MCF 10A (cell line): ENCODE measurements at regions of chr1 and their contacts with region 1.

Region 1: DNA sequence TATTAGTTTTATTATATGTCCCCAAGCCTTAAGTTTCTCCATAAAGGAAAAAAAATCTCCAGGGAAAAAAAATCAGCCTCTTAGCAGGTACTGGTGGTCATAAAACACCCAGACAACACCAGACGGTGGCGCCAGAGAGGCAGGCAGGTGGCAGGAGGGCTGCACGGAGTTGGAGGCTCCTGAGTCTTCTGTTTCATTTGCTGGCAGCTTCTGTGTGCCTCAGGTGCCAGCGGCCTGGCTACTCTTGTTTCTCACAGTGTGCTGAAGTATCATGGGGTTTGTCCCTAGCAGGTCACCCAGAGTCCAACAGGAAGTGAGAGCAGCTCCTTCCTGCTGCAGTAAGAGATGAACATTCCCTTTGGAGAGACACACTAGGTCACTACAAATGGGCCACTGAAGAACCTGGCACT is 123.3 kb upstream of the GADD45A start:
- DNase-seq: peak; percentile 90
- H3K4me3 Mint-ChIP-seq: no peak overlapping the region
- H3K27ac Mint-ChIP-seq: no peak overlapping the region
- H3K4me1 Mint-ChIP-seq: peaks cover 6% of the 10 kb centered on the region
- H3K27me3 Mint-ChIP-seq: no peaks in the 10 kb centered on the region
- CTCF ChIP-seq: peak; percentile 95

Region 2: DNA sequence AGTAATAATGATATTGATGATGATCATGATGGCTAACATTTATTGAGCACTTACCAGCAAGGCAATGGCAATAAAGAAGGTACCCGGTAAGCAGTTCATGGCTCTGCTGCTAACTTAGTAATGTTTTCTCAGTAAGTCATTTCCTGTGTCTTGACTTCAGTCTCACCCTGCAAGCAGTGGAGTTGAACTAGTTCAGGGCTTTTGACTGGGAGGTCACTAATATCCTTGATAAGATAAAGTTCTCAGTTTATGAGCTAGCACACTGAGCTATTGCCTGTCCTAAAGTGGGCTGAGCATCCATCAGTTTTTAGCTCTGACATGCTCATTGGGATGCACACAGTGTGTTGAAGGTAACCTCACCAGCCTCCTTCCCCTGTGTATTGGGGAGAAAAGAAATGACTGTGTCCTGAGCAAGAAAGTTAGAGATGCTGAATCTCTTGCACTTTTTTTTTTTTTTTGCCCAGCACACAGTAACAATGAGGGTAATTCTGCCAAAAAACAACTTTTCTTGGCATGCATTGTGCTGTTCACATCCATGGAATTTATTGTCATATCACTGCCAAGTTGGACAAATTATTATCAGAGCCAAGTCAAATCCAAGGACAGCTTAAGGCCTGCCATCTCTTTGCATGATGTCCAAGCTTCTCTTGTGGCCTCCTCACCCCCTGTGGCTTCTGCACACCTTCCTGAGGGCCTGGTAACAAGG is 67.8 kb after region 1 on chr1:
- CTCF ChIA-PET with region 1: interaction called, 12 read pairs
- POLR2A ChIA-PET with region 1: no interaction called
- intact Hi-C with region 1: no loop called
- DNase-seq: peak; percentile 71
- H3K4me3 Mint-ChIP-seq: no peak overlapping the region
- H3K27ac Mint-ChIP-seq: no peak overlapping the region
- H3K4me1 Mint-ChIP-seq: peaks cover 30% of the 10 kb centered on the region
- H3K27me3 Mint-ChIP-seq: no peaks in the 10 kb centered on the region
- CTCF ChIP-seq: no peak

Region 3: DNA sequence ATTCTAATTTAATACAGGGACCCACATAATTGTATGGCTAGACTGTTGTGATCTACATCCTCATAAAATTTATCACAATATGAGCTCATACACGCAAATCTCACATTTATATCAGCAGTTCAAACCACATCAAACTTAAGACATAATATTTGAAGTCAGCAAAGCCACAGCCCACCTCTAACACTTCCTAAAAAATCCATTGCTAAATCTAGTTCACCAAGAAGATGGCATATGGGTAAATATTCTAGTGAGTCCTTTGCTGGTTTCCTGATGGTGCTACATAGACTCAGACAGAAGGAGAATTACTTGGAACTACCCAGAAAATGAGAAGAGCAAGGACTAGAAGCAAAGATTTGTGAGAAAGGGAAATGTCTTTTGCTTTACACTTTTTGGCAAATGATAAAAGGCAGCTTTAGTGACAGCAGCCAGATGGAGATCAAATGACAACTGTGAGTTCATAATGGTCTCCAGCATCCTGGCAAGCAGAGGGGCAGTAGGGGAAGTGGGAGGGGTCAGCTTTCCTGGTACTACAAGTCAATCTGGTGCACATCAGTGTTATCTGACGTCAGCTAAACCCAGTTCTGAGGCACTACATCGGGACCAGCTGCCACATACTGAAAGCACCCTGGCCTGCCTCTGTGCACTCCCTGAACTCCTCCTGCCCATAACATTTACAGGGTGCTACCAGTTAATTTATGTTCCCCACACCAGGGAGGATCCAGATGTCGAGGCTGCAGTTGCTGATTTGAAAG is 112.7 kb after region 1 on chr1:
- CTCF ChIA-PET with region 1: interaction called, 18 read pairs
- POLR2A ChIA-PET with region 1: interaction called, 4 read pairs
- intact Hi-C with region 1: no loop called
- DNase-seq: no peak
- H3K4me3 Mint-ChIP-seq: no peak overlapping the region
- H3K27ac Mint-ChIP-seq: no peak overlapping the region
- H3K4me1 Mint-ChIP-seq: peaks cover under 1% of the 10 kb centered on the region
- H3K27me3 Mint-ChIP-seq: no peaks in the 10 kb centered on the region
- CTCF ChIP-seq: no peak

Region 4: GRCh38 chr1:67705735-67706453 is 144.2 kb after region 1 on chr1:
- CTCF ChIA-PET with region 1: interaction called, 10 read pairs
- POLR2A ChIA-PET with region 1: no interaction called
- intact Hi-C with region 1: no loop called
- DNase-seq: no peak
- H3K4me3 Mint-ChIP-seq: no peak overlapping the region
- H3K27ac Mint-ChIP-seq: no peak overlapping the region
- H3K4me1 Mint-ChIP-seq: peaks cover 22% of the 10 kb centered on the region
- H3K27me3 Mint-ChIP-seq: no peaks in the 10 kb centered on the region
- CTCF ChIP-seq: no peak

Region 5: DNA sequence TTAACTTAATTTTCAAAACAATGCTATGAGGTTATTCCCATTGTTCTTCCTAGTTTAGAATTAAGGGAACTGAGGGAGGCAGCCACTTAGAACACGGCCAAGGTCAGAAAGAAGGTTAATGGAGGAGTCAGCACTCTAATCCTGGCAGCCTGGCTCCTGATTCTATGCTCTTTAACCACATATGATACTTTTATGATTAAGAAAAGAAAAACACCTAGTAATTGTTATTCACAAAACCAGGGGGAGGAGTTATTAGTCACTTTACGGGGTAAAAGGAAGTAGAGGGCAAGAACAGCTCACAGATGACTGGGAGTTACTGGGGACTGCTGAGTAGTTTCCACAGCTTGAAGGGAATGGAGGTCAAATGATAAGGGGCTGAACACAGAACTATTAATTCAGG is 161.9 kb after region 1 on chr1:
- CTCF ChIA-PET with region 1: interaction called, 10 read pairs
- POLR2A ChIA-PET with region 1: interaction called, 3 read pairs
- intact Hi-C with region 1: no loop called
- DNase-seq: peak; percentile 77
- H3K4me3 Mint-ChIP-seq: no peak overlapping the region
- H3K27ac Mint-ChIP-seq: no peak overlapping the region
- H3K4me1 Mint-ChIP-seq: peaks cover 16% of the 10 kb centered on the region
- H3K27me3 Mint-ChIP-seq: no peaks in the 10 kb centered on the region
- CTCF ChIP-seq: no peak

Region 6: GRCh38 chr1:67748630-67749029 is 186.9 kb after region 1 on chr1:
- CTCF ChIA-PET with region 1: interaction called, 32 read pairs
- POLR2A ChIA-PET with region 1: no interaction called
- intact Hi-C with region 1: no loop called
- DNase-seq: peak; percentile 79
- H3K4me3 Mint-ChIP-seq: peak overlapping the region; percentile 65
- H3K27ac Mint-ChIP-seq: peak overlapping the region; percentile 89
- H3K4me1 Mint-ChIP-seq: peaks cover 58% of the 10 kb centered on the region
- H3K27me3 Mint-ChIP-seq: no peaks in the 10 kb centered on the region
- CTCF ChIP-seq: no peak

Region 7: DNA sequence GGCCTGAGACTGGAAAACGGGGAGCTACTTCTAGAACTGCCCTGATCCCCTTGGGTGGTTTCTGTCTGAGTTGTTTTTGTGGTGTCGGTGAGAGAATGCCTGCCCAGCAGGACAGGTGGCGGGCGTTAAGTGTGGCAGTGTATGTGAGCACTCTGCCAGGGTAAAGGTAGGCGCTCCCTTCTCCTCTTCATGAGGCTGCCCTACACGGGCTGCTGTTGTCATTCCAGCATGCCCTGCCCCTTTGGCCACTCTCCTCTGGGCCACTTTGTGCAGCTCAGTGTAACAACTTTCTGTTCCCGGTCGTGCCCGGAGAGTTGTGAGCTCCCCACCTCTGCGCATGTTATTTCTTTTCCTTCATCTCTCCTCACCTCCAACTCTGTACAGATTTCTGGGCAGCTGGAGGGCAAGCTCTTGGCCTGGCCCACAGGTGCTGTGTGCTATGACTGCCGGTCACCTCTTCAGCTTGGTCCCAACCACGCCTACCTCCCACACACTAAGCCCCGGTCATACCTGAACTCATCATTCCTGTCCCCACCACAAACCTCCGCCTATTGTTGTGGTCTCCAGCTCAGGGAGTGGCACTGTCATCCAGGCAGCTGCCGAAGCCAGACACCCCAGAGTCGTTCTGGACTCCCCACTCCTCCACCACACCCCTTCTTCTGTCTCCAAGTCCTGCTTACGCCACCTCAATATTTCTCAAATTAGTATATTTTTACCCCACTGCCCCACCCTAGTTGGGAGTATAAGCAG is 192.2 kb after region 1 on chr1:
- CTCF ChIA-PET with region 1: interaction called, 98 read pairs
- POLR2A ChIA-PET with region 1: interaction called, 4 read pairs
- intact Hi-C with region 1: no loop called
- DNase-seq: peak; percentile 69
- H3K4me3 Mint-ChIP-seq: peak overlapping the region; percentile 38
- H3K27ac Mint-ChIP-seq: peak overlapping the region; percentile 89
- H3K4me1 Mint-ChIP-seq: peaks cover 56% of the 10 kb centered on the region
- H3K27me3 Mint-ChIP-seq: no peaks in the 10 kb centered on the region
- CTCF ChIP-seq: no peak